ENCODE measurements at regions of chr1 and their contacts with region 1.

Region 1: GRCh38 chr1:155208541-155209311 is at the start of gene MTX1:
- DNase-seq: peak; percentile 76 to 84
- ATAC-seq: peak; percentile 75 to 87
- H3K4me3 ChIP-seq: peak within 1 kb of the TSS; percentile 90
- H3K27ac ChIP-seq: peak within 1 kb of the TSS; percentile 97 to 99
- H3K4me1 ChIP-seq: peaks cover 23% of the 10 kb centered on the region
- CTCF ChIP-seq: no peak
- EP300 ChIP-seq: no peak; a peak in 1 of 5 replicates
- POLR2A ChIP-seq: peak; percentile 52
- RAD21 ChIP-seq: no peak
- polyA plus RNA-seq, gene MTX1: 53.4 and 73.9 TPM in 2 replicates

Region 2: DNA sequence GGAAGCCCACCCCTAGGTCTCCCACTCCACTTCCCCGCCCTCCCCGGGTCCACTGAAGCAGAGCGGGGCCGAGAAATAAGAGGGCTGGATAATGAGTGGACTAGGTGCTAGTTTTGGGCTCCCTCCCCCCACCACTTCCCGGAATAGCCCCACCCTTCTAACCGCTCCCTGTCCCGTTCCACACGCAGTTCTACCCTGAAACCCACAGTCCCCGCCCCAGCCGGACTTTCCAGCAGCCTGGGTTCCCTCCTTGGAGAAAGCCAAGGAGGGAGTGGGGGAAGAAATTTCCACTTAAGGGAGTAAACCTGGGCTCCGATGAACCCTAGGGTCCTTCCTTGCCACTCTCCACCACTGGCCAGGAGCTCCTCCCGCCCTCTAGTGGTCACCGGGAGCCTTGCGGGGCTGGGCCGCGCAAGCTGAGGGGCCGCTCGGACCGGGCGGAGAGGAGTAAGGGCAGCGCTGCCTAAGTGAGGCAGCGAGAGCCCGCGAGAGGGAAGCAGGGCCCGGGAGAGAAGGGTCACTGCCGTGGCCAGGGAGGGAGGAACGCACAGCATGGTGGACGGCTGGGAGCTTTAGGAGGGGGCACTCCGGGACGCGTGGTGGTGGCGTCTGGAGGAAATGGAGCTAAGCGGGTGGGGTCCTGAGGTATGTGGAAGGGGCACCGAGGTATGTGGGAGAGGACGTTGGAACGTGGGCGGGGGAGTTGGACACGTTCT is 15.3 kb before region 1 on chr1:
- CTCF ChIA-PET with region 1: interaction called, 84 read pairs
- POLR2A ChIA-PET with region 1: interaction called, 40 read pairs
- DNase-seq: peak; percentile 84 to 93
- ATAC-seq: peak; percentile 76 to 90
- H3K4me3 ChIP-seq: peak overlapping the region; percentile 79
- H3K27ac ChIP-seq: peak overlapping the region; percentile 84 to 96
- H3K4me1 ChIP-seq: peaks cover 22% of the 10 kb centered on the region
- CTCF ChIP-seq: peak; percentile 95
- EP300 ChIP-seq: no peak
- POLR2A ChIP-seq: peak; percentile 49; the same call in 1 of the 2 replicates
- RAD21 ChIP-seq: peak; percentile 59 to 64; a peak in 4 of 5 replicates

Region 3: DNA sequence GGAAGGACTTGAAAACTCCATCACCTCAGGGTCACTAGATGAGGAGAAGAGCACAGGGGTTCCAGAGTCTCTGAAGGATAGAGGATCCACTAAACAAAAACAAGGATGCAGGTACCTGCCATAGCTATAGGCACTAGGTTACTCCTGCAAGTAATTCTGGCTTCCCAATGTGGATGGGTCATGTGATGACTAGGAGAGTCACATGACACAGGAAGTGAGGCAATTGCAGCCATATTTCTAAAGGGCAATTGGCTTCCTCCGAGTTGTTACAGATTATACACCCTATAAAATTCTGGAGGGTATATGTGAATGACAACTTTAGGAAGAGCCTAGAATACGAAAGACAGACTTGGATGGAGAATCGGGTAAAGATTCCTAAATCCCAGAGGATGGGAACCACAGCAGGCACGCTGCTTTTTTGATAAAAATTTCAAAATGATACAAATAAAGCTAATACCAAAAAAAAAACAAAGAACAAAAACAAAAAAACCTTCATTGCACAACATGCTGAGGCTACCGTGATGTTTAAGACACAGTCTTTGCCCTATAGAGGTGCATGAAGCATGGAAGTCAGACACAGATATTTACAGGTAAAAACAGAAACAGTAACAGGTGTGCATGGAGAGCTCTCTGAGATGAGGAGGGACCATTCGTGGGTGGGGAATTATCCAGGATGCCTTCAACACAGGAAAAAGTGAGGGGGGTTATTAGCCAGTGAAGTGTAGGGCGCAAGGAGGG is 10.3 kb after region 1 on chr1:
- CTCF ChIA-PET with region 1: interaction called, 96 read pairs
- POLR2A ChIA-PET with region 1: no interaction called
- DNase-seq: peak in 1 of 2 experiments; percentile 62
- ATAC-seq: peak in 1 of 2 experiments; percentile 37; a peak in 3 of 6 replicates
- H3K4me3 ChIP-seq: no peak overlapping the region
- H3K27ac ChIP-seq: no peak overlapping the region
- H3K4me1 ChIP-seq: peaks cover 15% of the 10 kb centered on the region
- CTCF ChIP-seq: no peak
- EP300 ChIP-seq: no peak
- POLR2A ChIP-seq: no peak
- RAD21 ChIP-seq: no peak

Region 4: DNA sequence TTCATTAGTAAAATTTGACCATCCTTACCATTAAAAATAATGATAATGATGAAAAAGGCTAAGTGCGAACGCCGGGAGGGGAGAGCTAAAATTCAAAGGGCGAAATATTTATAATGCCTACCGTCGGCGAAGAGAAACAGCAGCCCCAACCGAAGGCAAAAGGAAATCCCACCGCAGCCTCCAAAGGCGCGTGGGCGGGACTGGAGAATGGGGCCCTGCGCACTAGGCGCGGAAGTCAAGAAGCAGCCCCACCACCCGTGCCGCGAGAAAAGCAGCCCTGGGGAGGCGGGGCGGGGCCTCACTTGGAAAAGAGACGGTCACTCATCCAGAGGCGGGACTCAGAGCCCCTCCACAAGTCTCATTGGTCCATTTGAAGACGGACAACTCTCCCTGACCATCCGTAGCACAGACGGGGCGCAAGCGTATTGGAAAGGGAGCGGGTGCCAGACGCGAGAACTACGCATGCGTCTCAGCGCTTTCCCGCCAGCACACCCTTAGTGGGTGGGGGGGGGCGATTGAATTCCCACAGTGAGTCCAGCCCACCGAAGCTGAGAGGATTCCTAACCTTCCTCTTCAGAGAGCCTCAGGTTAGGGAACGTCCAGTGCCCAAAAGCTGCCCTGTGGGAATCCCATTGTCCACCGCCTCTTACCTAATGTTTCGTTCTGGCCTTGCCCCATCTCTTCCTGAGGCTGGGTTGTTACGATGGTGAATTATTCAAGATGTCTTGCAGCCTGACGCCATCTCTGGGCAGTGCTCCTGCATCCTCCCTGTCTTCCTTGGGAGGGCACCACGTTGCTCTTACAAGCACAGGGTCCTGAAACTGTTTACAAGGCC is 18.8 kb after region 1 on chr1:
- CTCF ChIA-PET with region 1: interaction called, 96 read pairs
- POLR2A ChIA-PET with region 1: interaction called, 10 read pairs
- DNase-seq: peak; percentile 99 to 100
- ATAC-seq: peak; percentile 94 to 97
- H3K4me3 ChIP-seq: peak overlapping the region; percentile 57
- H3K27ac ChIP-seq: peak overlapping the region; percentile 88 to 90
- H3K4me1 ChIP-seq: peaks cover 43% of the 10 kb centered on the region
- CTCF ChIP-seq: no peak
- EP300 ChIP-seq: no peak
- POLR2A ChIP-seq: peak; percentile 82
- RAD21 ChIP-seq: no peak

Region 5: DNA sequence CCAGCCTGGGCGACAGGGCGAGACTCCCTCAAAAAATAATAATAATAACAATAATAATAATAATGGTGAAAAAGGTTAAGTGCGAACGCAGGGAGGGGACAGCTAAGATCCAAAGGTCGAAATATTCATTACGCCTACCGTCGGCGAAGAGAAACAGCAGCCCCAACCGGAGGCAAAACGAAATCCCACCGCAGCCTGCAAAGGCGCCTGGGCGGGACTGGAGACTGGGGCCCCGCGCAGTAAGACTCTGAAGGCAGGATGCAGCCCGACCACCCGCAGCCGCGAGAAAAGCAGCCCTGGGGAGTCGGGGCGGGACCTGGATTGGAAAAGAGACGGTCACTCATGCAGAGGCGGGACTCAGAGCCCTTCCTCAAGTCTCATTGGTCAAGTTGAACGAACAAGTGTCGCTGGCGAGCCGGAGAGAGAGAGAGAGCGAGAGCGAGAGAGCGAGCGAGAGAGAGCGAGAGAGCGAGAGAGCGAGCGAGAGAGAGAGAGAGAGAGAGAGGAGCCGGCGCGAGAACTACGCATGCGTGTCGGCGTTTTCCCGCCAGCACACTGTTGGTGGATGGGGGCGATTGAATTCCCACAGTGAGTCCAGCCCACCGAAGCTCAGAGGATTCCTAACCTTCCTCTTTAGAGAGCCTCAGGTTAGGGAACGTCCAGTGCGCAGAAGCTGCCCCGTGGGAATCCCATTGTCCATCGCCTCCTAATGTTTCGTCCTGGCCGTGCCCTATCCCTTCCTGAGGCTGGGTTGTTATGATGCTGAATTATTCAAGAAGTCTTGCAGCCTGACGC is 35.8 kb after region 1 on chr1:
- CTCF ChIA-PET with region 1: interaction called, 102 read pairs
- POLR2A ChIA-PET with region 1: no interaction called
- DNase-seq: peak; percentile 99
- ATAC-seq: peak; percentile 94 to 96
- H3K4me3 ChIP-seq: peak overlapping the region; percentile 59
- H3K27ac ChIP-seq: peak overlapping the region; percentile 82 to 90
- H3K4me1 ChIP-seq: peaks cover 24% of the 10 kb centered on the region
- CTCF ChIP-seq: no peak
- EP300 ChIP-seq: no peak
- POLR2A ChIP-seq: peak; percentile 79
- RAD21 ChIP-seq: 0 out of 5 replicates have a peak, but pooled peaks of 1 of the 2 experiments have one; percentile 16

Region 6: DNA sequence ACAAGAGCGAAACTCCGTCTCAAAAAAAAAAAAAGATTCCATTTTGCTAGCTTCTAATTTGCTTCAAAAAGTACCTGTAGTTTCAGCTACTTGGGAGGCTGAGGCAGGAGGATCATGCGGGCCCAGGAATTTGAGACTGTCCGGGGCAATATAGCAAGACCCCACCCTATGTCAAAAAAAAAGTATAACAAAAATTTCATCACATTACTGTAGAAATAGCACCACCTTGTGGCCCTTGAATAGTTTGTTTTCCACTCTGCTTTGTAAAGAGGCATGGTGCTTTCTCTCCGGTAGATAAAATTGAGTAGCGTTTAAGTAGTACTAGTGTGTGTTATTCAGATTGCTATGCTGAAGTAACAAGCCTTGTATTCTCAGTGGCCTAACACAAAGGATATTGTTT is 383.0 kb after region 1 on chr1:
- CTCF ChIA-PET with region 1: interaction called, 12 read pairs
- POLR2A ChIA-PET with region 1: no interaction called
- DNase-seq: peak; percentile 40 to 74
- ATAC-seq: peak; percentile 84 to 87; a peak in 5 of 6 replicates
- H3K4me3 ChIP-seq: no peak overlapping the region
- H3K27ac ChIP-seq: no peak overlapping the region
- H3K4me1 ChIP-seq: no peaks in the 10 kb centered on the region
- CTCF ChIP-seq: peak; percentile 88
- EP300 ChIP-seq: no peak
- POLR2A ChIP-seq: no peak
- RAD21 ChIP-seq: peak; percentile 82 to 89

Region 7: GRCh38 chr1:155648551-155649147 is 439.9 kb after region 1 on chr1:
- CTCF ChIA-PET with region 1: interaction called, 10 read pairs
- POLR2A ChIA-PET with region 1: interaction called, 11 read pairs
- DNase-seq: peak; percentile 85 to 87
- ATAC-seq: peak; percentile 93 to 96
- H3K4me3 ChIP-seq: peak overlapping the region; percentile 36; the same call in 2 of the 3 replicates
- H3K27ac ChIP-seq: peak overlapping the region; percentile 81 to 92
- H3K4me1 ChIP-seq: peaks cover 67% of the 10 kb centered on the region
- CTCF ChIP-seq: peak; percentile 77
- EP300 ChIP-seq: no peak
- POLR2A ChIP-seq: no peak
- RAD21 ChIP-seq: peak; percentile 84 to 85

Measured in A549 (cell line).